Ovary (tissue), 10 donors: ENCODE measurements at regions of chr2 and their contacts with region 1.

Region 1: GRCh38 chr2:218063486-218063885 is 5.6 kb upstream of the RUFY4 start:
- DNase-seq: no peak
- H3K4me3 ChIP-seq: no peak overlapping the region
- H3K27ac ChIP-seq: no peak overlapping the region
- H3K4me1 ChIP-seq: no peaks in the 10 kb centered on the region
- H3K27me3 ChIP-seq: no peaks in the 10 kb centered on the region
- CTCF ChIP-seq: no peak
- EP300 ChIP-seq: no peak
- POLR2A ChIP-seq: no peak

Region 2: DNA sequence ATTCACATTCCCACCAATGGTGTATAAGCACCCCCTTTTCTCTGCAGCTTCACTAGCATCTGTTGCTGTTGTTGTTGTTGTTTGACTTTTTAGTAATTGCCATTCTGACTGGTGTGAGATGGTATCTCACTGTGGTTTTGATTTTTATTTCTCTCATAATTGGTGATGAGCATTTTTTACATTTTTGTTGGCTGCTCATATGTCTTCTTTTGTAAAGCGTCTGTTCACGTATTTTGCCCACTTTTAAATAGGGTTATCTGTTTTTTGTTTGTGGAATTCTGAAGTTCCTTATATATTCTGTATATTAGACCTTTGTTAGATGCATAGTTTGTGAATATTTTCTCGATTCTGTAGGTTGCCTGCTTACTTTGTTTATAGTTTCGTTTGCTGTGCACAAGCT is 925.2 kb before region 1 on chr2:
- intact Hi-C with region 1: loop called in 1 of 4 experiments (anchors 10 kb)
- DNase-seq: no peak
- H3K4me3 ChIP-seq: no peak overlapping the region
- H3K27ac ChIP-seq: no peak overlapping the region
- H3K4me1 ChIP-seq: no peaks in the 10 kb centered on the region
- H3K27me3 ChIP-seq: no peaks in the 10 kb centered on the region
- CTCF ChIP-seq: no peak
- EP300 ChIP-seq: no peak
- POLR2A ChIP-seq: no peak

Region 3: GRCh38 chr2:217551252-217551899 is 512.1 kb before region 1 on chr2:
- intact Hi-C with region 1: no loop called
- DNase-seq: no peak
- H3K4me3 ChIP-seq: no peak overlapping the region
- H3K27ac ChIP-seq: no peak overlapping the region
- H3K4me1 ChIP-seq: peaks cover 14% of the 10 kb centered on the region
- H3K27me3 ChIP-seq: no peaks in the 10 kb centered on the region
- CTCF ChIP-seq: no peak
- EP300 ChIP-seq: no peak
- POLR2A ChIP-seq: no peak